Activated CD4-positive, alpha-beta T cell treated with anti-CD3 and anti-CD28 coated beads, Interleukin-2, amount 10 ng/mL, durations not matched to agents 7 days and 5 days (primary cell): ENCODE measurements at regions of chr5 and their contacts with region 1.

Region 1: GRCh38 chr5:149345147-149345875 is at the start of gene GRPEL2:
- DNase-seq: peak; percentile 93
- H3K4me3 Mint-ChIP-seq: peak within 1 kb of the TSS; percentile 83
- H3K27ac Mint-ChIP-seq: peak within 1 kb of the TSS; percentile 93
- H3K4me1 Mint-ChIP-seq: peaks cover 56% of the 10 kb centered on the region
- H3K27me3 Mint-ChIP-seq: no peaks in the 10 kb centered on the region
- total RNA-seq, gene GRPEL2: 36.1 to 36.6 TPM

Region 2: DNA sequence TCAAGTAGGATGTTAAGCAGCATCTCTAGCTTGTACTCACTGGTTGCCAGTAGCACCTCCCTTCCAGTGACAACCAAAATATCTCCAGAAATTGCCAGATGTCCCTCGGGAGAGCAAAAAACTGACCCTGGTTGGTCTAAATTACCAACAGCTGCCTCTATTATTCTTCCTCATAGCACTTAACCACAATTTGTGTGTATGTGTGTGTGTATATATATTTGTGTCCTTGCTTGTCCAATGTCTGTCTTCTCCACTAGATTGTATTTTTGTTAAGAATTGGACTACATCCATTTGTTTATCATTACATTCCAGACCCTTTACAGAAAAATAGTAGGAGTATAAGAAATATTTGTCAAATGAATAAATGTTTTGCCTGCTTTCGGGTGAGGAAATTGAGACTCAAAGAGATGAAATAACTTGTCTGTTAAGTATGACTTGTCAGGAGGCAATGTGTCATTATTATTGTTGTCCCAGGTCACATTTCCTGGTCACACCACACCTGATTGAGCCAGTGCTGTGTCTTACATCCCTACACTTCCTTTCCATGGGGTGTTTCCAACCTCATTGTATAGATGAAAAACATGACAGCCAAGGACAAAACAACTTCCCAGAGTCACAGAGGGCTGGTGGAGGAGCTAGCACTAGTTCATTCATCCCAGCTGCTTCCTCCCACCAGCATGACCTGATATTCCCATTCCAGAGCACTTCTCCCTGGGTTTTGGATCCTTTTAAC is 11.4 kb before region 1 on chr5:
- CTCF ChIA-PET with region 1: interaction called, 10 read pairs
- POLR2A ChIA-PET with region 1: no interaction called
- DNase-seq: no peak
- H3K4me3 Mint-ChIP-seq: no peak overlapping the region
- H3K27ac Mint-ChIP-seq: no peak overlapping the region
- H3K4me1 Mint-ChIP-seq: no peaks in the 10 kb centered on the region
- H3K27me3 Mint-ChIP-seq: peaks cover 6% of the 10 kb centered on the region

Region 3: DNA sequence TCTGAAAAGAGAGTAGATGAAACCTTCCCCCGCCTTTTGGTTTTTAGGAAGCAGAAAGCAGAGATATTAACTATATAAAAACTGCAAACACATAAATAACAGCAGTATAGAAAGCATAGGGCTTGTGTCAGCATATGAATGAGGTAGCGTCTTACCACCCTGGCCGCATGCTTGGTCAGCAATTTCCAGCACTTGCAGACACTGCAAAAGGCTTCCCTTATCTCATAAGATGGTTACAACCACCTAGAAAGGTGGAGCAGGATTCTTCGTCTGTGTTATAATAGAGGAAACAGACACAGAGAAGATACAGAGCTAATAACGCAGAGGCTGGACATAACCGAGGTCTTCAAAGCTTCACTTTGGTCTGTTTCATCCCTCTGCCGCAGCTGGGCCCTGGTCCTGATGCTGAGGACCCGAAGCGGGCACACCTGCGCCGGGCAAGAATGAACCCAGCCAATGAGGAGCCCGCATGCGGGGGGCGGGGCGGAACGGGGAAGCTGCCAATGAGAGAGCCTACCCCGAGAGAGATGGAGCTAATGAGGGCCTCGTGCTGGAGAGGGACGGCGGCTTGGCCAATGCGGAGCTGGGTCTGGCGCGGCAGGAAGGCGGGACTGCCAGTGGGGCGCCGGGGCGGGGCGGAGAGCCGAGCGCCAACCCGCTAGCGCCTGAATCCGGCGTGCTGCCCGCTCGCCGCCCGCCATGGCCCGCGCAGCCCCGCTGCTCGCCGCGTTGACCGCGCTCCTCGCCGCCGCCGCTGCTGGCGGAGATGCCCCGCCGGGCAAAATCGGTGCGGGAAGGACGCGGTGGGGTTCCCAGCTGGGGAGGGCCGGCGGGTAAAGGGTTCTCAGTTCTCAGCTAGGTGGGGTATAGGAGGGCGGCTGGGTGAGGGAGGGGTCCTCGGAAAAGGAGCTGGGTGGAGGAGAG is 12.3 kb after region 1 on chr5 and contains the start of gene PCYOX1L:
- CTCF ChIA-PET with region 1: interaction called, 19 read pairs
- POLR2A ChIA-PET with region 1: interaction called, 10 read pairs
- DNase-seq: peak; percentile 93
- H3K4me3 Mint-ChIP-seq: peak within 1 kb of the TSS; percentile 86
- H3K27ac Mint-ChIP-seq: peak within 1 kb of the TSS; percentile 86
- H3K4me1 Mint-ChIP-seq: peaks cover 74% of the 10 kb centered on the region
- H3K27me3 Mint-ChIP-seq: no peaks in the 10 kb centered on the region
- total RNA-seq, gene PCYOX1L: 34.5 to 34.6 TPM